Left cardiac atrium (tissue), 4 donors: ENCODE measurements at regions of chr9 and their contacts with region 1.

Region 1: DNA sequence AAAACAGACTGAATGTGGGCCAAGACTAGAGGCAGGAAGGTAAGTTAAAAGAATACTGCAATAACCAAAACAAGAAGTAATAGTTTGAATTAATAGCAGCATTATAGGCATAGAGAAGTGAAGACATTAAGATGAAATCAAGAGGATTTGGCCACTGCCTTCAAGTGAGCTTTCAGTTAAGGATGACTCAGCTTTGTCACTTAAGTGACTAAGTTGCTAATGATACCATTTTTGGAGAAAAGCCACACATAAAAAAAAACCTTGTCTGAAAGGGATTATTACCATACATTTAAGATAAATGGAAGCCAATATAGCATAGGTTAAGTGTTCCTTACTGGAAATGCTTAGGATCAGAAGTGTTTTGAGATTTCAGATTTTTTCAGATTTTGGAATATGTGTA is 57.0 kb downstream of the ECPAS start:
- DNase-seq: no peak
- ATAC-seq: peak in 1 of 2 donors; percentile 53

Region 2: DNA sequence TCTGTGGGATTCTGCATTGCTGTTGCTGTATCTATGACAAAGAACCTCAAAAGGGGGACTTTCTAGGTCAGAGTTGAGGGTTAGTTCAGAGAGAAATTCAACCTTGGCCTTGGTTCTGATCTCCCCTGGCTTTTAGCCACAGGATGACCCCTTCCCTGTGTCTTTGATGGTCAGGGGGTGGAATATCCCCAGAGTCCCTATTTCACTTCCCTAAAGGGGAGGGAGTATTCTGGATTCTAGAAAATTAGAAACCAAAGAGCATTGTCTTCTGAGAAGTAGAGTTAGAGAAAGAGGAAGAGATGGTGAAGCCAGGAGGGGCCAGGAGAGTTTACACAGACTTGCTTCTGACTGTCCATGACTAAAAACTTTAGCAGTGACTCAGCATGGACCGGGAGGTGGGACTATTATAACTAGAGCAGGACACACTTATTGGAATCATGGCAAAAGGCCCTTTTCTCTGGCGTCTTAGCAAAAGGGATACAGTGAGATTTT is 332.7 kb before region 1 on chr9:
- intact Hi-C with region 1: no loop called
- DNase-seq: peak; percentile 35
- ATAC-seq: peak; percentile 82 to 95

Region 3: GRCh38 chr9:111375817-111376564 is 51.2 kb before region 1 on chr9:
- intact Hi-C with region 1: loop called in 1 of 2 experiments (anchors 10 kb)
- DNase-seq: no peak
- ATAC-seq: no peak

Region 4: DNA sequence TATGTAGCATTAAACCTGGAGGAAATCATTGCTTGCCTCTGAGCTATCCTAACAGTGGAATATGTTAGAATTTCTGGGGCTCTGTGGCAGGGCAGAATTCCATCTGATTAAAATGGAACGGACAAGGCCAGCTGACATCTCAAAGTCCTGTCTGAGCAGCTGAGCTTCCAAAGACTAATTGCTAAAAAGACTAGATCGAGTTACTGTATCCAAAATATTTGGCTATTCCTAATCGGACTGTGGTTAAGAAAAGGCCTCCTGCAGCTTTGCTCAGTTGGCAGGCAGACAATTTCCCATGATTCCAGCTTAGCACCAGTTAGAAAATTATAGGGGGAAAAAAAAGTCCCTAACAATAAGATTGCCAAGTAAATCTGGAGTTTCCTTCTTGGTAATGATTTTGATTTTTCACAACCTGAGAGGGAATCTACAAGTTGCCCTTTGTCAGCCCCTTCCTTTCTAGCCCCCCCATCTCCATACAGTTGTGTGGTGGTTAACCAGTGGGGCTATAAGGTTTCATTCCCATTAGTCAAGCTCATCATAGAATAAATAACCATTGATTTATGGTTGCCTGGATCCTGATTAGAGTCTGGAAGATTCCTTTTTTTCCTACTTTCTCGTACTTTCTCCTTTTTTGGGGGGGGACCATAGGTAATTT is 145.9 kb after region 1 on chr9:
- intact Hi-C with region 1: no loop called
- DNase-seq: no peak
- ATAC-seq: peak; percentile 41 to 74